Left colon (tissue), 2 donors: ENCODE measurements at regions of chr11 and their contacts with region 1.

Region 1: DNA sequence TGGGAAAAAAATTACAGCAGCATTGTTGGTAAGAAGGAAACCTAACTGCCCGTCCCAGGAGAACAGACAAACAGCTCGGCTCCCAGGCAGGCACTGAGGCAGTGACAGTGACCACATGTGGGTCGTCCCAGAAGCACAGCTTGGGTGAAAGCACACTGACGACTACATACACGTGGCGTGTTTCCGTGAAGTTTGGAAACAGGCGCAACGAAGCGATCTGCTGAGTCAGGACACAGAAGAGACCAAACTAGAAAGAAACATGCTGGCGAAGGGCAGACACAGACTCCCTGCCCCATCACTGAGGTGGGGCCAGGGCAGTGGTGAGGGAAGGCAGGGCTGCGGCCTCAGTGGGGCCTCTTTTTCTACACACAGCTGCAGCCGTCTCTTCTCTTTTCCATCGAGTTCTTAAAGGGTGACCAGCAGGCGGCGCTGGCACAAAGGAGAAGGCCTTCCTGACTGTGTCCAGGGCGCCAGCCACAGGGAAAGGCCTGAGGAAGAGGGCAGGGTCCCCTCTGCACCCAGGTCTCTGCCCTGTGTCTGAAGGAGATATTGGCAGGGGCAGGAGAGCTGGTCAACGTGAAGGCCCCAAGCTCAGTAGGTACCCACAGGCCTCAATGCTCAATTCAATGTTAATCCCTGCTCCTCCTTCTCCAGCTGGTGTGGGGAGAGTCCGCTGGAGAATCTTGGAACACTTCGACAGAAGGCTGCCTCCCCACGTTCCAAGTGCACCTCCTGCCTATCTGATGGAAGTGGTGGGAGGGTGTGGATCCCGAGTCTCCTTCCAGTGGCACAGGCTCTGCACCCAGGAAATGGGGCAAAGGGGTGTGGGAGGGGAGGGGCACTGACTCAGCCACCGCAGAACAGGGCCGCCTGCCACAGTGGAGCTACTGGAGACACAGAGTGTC is 19.9 kb downstream of the CARS1 start:
- DNase-seq: peak; percentile 55 to 93
- ATAC-seq: peak; percentile 84

Region 2: GRCh38 chr11:3091791-3092602 is 54.7 kb after region 1 on chr11:
- intact Hi-C with region 1: loop called (anchors 2 to 5 kb)
- DNase-seq: peak; percentile 67 to 76
- ATAC-seq: peak; percentile 90

Region 3: DNA sequence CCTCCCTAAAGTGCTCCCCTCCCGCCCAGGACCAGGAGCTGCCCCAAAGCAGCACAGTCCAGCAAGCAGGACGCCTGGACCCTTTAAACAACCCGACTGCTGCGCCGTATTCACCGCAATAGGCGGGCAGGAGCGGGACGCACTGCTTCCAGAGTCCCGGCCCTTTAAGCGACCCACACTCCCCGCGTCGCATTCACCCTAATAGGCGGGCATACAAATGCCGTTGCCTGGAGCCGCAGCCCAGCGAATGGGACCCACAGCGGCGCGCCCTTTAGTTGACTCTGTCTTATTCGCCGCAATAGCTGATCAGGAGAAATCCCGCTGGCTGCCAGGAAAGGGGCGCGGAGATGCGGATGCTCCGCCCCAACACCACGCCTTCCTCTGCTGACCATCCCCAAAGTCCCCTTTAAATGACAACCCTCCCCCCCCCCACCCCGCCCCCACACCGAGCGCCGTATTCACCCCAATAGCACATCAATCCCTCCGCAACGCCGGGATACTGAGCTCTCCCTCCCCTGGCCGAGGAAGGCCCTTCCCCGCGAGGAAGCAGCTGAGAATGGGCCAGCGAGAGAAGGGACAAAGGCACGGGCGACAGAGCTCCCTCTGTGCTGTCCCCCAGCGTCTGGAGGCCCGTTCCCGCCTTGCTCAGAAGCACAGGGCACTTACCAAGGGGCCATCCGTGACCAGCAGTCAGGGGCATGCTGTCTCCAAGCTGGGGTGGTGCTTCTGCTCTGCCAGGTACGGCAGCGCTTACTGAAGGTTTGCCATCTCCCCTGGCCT is 123.2 kb after region 1 on chr11:
- intact Hi-C with region 1: no loop called
- DNase-seq: peak; percentile 87
- ATAC-seq: peak; percentile 82

Region 4: DNA sequence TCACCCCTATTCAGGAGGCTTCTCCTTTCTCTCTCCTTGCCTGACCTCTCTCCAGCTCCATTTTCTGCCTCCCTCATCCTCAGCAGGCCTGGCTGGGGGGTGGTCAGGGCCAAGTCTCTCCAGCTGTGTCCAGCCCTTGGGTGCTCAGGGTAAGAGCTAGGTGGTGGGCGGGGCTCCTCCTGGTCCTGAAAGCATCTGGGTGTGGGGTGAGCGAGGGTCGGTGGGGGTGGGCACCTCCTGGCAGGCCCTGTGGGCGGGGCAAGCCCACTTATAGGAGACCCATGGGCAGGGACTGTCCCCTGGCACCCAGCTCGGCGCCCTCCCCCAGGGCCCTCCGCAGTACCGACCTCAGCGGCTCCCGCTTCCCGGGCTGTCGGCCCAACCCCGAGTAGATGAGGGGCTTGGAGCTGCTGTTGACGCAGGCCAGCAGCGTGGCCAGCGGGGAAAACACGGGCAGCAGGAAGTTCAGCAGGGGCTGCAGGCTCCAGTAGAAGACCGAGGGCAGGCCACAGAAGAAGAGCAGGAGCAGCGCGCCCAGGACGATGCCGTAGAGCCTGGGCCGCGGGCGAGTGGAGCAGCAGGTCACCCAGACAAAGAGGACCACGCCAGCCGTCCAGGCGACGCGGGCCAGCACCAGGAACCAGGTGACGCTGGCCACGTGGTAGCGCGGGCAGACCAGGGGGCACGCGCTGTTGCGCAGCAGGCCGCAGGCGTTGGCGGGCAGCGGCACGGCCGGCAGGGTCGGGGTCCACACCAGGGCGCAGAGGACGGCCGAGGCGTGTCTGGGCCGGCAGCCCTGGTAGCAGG is 180.6 kb after region 1 on chr11:
- intact Hi-C with region 1: loop called in 1 of 2 experiments (anchors 10 kb)
- DNase-seq: peak in 1 of 2 donors; percentile 15
- ATAC-seq: no peak